ENCODE measurements at regions of chr21 and their contacts with region 1.

Region 1: GRCh38 chr21:35940074-35940927 is 120.0 kb downstream of the SETD4 start:
- DNase-seq: no peak
- ATAC-seq: peak; percentile 57
- H3K4me3 ChIP-seq: no peak overlapping the region
- H3K4me3 Mint-ChIP-seq: no peak overlapping the region
- H3K27ac ChIP-seq: no peak overlapping the region
- H3K27ac Mint-ChIP-seq: no peak overlapping the region
- H3K4me1 ChIP-seq: no peaks in the 10 kb centered on the region
- H3K4me1 Mint-ChIP-seq: peaks cover 0 to 1% (median 0%) of the 10 kb centered on the region in 7 donors
- H3K27me3 ChIP-seq: no peaks in the 10 kb centered on the region
- H3K27me3 Mint-ChIP-seq: peaks cover 0 to 14% (median 8%) of the 10 kb centered on the region in 5 donors

Region 2: DNA sequence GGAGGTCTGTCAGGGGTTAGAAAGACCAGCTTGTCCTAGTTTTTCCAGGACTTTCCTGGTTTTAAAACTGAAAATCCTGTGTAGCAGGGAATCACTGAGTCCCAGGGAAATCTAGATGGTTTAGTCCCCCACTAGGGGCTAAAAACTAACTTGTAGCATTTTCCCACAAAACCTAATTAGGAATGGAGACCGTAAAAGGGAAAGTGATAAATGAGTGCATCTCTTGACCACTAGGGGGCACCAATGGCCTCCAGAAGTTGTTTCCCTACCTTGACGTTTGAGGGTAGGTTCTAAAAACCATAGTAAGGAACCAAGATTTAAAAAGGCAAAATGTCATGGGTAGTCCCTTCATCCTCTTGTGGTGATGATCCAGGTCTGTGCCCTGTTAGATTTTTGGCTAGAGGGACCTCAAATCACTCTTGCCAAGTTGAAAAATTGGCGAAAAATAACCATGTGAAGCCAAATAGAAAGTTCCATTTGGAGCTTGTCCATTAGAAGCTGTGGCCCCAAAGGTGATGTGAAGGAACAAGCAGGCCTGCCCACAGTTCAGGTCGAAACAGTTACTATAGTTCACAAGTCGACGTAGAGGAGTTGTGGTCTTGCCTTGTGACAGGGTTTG is 1247.0 kb before region 1 on chr21:
- CTCF ChIA-PET with region 1: no interaction called
- POLR2A ChIA-PET with region 1: no interaction called
- intact Hi-C with region 1: loop called in 1 of 2 experiments (anchors 1 kb)
- DNase-seq: peak in 7 of 9 donors; percentile 33 to 63 (median 58)
- ATAC-seq: peak; percentile 72
- H3K4me3 ChIP-seq: no peak overlapping the region
- H3K4me3 Mint-ChIP-seq: no peak overlapping the region
- H3K27ac ChIP-seq: no peak overlapping the region
- H3K27ac Mint-ChIP-seq: no peak overlapping the region
- H3K4me1 ChIP-seq: no peaks in the 10 kb centered on the region
- H3K4me1 Mint-ChIP-seq: peaks cover 0 to 10% (median 3%) of the 10 kb centered on the region in 7 donors
- H3K27me3 ChIP-seq: peaks cover 0 to 4% of the 10 kb centered on the region in 2 donors
- H3K27me3 Mint-ChIP-seq: peaks cover 2 to 43% (median 10%) of the 10 kb centered on the region in 5 donors

Region 3: DNA sequence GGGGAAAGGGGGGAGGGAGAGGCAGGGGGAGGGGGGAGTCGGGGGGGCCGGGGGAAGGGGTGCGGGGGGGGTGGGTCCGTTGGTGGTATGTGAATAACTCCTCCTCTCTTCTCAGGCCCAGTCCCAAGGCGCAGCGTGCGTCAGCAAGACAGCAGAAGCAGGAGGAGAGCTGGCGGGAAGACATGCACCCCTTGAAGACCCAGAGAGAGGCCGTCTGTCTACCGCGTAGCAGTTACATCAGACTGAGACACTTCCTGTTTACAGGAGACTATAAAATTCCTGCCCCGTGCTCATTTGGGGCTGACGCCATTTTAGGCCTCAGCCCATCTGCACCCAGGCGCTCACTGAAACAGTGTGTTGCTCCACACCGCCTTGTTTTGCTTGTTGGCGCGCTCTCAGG is 64.7 kb after region 1 on chr21:
- CTCF ChIA-PET with region 1: no interaction called
- POLR2A ChIA-PET with region 1: no interaction called
- intact Hi-C with region 1: no loop called
- DNase-seq: no peak
- ATAC-seq: no peak
- H3K4me3 ChIP-seq: no peak overlapping the region
- H3K4me3 Mint-ChIP-seq: no peak overlapping the region
- H3K27ac ChIP-seq: no peak overlapping the region
- H3K27ac Mint-ChIP-seq: no peak overlapping the region
- H3K4me1 ChIP-seq: no peaks in the 10 kb centered on the region
- H3K4me1 Mint-ChIP-seq: no peaks in the 10 kb centered on the region
- H3K27me3 ChIP-seq: no peaks in the 10 kb centered on the region
- H3K27me3 Mint-ChIP-seq: peaks cover 8 to 28% (median 11%) of the 10 kb centered on the region in 5 donors